ENCODE measurements at regions of chr7 and their contacts with region 1.

Region 1: GRCh38 chr7:123748734-123749536 is at the start of gene WASL:
- DNase-seq: peak; percentile 89
- H3K4me3 ChIP-seq: peak within 1 kb of the TSS; percentile 93 to 98 (median 98)
- H3K27ac ChIP-seq: peak within 1 kb of the TSS; percentile 71
- H3K4me1 ChIP-seq: peaks cover 46% of the 10 kb centered on the region
- H3K27me3 ChIP-seq: no peaks in the 10 kb centered on the region
- CTCF ChIP-seq: no peak
- POLR2A ChIP-seq: peak; percentile 87
- total RNA-seq, gene WASL: 22.1 and 24.0 TPM in 2 replicates

Region 2: DNA sequence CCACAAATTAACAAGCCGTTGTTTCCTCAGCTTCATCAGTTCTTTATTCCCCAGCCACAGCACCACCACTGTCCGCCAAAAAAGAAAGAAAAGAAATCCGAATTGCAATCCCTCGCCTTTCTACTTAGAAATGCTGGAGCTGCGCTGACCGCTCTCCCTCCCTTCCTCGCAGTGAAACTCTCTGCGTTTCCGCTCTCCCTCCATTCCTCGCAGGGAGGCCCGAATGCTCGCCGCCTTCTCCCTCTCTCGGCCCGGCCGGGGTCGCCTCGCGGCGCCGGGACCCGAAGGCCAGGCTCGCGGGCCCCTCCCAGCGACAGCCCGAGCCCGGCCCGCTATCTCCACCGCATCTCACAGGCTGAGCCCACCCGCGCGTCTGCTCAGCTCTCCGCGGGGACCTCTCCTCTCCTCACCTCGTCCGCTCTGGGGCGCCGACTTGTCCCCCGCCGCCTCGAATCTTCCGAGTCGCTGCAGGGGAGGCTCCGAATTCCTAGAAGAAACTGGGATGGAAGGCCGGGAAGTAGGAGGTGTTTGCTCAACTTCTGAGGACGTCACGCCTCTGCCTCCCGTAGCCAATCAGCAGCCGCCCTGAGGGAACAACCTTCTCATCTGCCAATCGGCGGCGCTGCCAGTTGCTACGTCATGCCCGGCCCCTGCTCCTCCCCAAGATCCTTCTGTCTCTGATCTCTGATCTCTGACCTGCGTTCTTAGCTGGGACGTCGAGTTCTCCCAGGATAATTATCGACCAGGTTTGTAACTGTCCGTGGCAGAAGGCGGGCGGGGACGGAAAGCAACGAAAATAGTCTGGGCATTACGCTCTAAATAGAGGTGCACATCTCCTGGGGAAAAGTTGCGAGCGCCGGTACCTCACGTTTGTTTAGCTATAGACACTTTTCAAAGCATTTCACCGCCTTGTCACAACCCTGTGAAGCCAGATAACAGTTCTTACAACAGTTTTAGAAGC is 1604.9 kb before region 1 on chr7 and contains the start of gene AASS:
- CTCF ChIA-PET with region 1: no interaction called
- POLR2A ChIA-PET with region 1: no interaction called
- dilution Hi-C with region 1: no loop called
- intact Hi-C with region 1: loop called (anchors 5 kb)
- DNase-seq: peak; percentile 96
- H3K4me3 ChIP-seq: peak within 1 kb of the TSS; percentile 68 to 92 (median 81)
- H3K27ac ChIP-seq: peak within 1 kb of the TSS; percentile 58
- H3K4me1 ChIP-seq: peaks cover 16% of the 10 kb centered on the region
- H3K27me3 ChIP-seq: no peaks in the 10 kb centered on the region
- CTCF ChIP-seq: no peak
- POLR2A ChIP-seq: peak; percentile 71
- total RNA-seq, gene AASS: 27.8 and 30.1 TPM in 2 replicates

Region 3: GRCh38 chr7:123534383-123535260 is 214.3 kb before region 1 on chr7 and contains the start of gene IQUB:
- CTCF ChIA-PET with region 1: interaction called, 6 read pairs
- POLR2A ChIA-PET with region 1: interaction called, 5 read pairs
- dilution Hi-C with region 1: no loop called
- intact Hi-C with region 1: loop called (anchors 2 kb)
- DNase-seq: peak; percentile 95
- H3K4me3 ChIP-seq: peak within 1 kb of the TSS; percentile 61 to 81 (median 80)
- H3K27ac ChIP-seq: peak within 1 kb of the TSS; percentile 74
- H3K4me1 ChIP-seq: peaks cover 27% of the 10 kb centered on the region
- H3K27me3 ChIP-seq: peaks cover 6 to 13% of the 10 kb centered on the region in 2 experiments
- CTCF ChIP-seq: no peak
- POLR2A ChIP-seq: no peak
- total RNA-seq, gene IQUB: not detected in 2 replicates

Region 4: DNA sequence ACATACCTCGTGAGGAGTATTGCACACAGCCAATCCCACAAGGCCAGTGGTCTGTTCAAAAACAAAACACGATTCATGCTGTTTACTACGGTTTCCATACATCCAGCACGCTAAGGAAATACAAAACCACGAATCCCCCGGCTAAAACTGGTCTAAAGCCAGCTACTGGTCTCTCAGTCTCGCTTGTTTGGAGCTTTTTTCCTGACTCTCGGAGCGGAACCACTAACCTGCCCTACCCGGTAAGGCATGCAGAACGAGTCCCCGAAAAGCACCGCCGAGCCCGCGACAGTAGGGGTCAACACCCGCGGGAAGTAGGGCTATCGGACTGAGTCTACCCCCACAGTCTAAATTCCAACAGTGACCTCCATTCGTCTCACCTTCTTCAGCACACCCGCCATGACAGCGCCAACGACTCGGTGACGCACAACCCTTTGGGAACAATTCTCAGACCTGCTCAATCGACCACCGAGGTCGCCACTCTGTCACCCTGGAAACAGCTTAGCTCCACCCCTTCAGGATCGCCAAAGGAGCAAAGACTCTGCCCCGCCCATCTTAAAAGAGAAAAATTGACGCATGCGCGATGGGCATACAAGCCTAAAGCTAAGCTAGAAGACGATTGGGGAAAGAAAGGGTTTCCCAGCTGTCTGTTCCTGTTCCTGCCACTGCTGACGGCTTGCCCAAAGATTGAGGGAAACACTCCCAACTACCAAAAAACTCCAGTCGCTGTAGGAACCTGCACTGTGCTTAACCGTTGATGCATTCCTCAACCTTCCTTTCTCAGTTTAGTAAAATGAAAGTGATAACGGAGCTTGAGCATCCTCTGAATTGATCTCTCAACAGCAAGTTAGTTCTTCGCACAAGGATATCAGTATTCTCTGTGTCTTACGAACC is 191.3 kb before region 1 on chr7 and contains the start of gene NDUFA5:
- CTCF ChIA-PET with region 1: interaction called, 3 read pairs
- POLR2A ChIA-PET with region 1: interaction called, 3 read pairs
- dilution Hi-C with region 1: no loop called
- intact Hi-C with region 1: loop called (anchors 5 kb)
- DNase-seq: peak; percentile 99
- H3K4me3 ChIP-seq: peak within 1 kb of the TSS; percentile 66 to 98 (median 88)
- H3K27ac ChIP-seq: peak within 1 kb of the TSS; percentile 75
- H3K4me1 ChIP-seq: peaks cover 6% of the 10 kb centered on the region
- H3K27me3 ChIP-seq: no peaks in the 10 kb centered on the region
- CTCF ChIP-seq: no peak
- POLR2A ChIP-seq: peak; percentile 76
- total RNA-seq, gene NDUFA5: 57.6 and 62.3 TPM in 2 replicates

Region 5: GRCh38 chr7:123655614-123656013 is 93.3 kb before region 1 on chr7 and contains the start of gene LMOD2:
- CTCF ChIA-PET with region 1: no interaction called
- POLR2A ChIA-PET with region 1: no interaction called
- dilution Hi-C with region 1: no loop called
- intact Hi-C with region 1: no loop called
- DNase-seq: no peak
- H3K4me3 ChIP-seq: no peak within 1 kb of the TSS
- H3K27ac ChIP-seq: no peak within 1 kb of the TSS
- H3K4me1 ChIP-seq: peaks cover 4% of the 10 kb centered on the region
- H3K27me3 ChIP-seq: peaks cover 0 to 2% of the 10 kb centered on the region in 2 experiments
- CTCF ChIP-seq: no peak
- POLR2A ChIP-seq: no peak
- total RNA-seq, gene LMOD2: not detected in 2 replicates

Region 6: GRCh38 chr7:123705211-123705901 is 43.6 kb before region 1 on chr7:
- CTCF ChIA-PET with region 1: interaction called, 20 read pairs
- POLR2A ChIA-PET with region 1: no interaction called
- dilution Hi-C with region 1: no loop called
- intact Hi-C with region 1: loop called (anchors 2 kb)
- DNase-seq: no peak
- H3K4me3 ChIP-seq: no peak overlapping the region
- H3K27ac ChIP-seq: no peak overlapping the region
- H3K4me1 ChIP-seq: no peaks in the 10 kb centered on the region
- H3K27me3 ChIP-seq: no peaks in the 10 kb centered on the region
- CTCF ChIP-seq: no peak
- POLR2A ChIP-seq: no peak

Region 7: DNA sequence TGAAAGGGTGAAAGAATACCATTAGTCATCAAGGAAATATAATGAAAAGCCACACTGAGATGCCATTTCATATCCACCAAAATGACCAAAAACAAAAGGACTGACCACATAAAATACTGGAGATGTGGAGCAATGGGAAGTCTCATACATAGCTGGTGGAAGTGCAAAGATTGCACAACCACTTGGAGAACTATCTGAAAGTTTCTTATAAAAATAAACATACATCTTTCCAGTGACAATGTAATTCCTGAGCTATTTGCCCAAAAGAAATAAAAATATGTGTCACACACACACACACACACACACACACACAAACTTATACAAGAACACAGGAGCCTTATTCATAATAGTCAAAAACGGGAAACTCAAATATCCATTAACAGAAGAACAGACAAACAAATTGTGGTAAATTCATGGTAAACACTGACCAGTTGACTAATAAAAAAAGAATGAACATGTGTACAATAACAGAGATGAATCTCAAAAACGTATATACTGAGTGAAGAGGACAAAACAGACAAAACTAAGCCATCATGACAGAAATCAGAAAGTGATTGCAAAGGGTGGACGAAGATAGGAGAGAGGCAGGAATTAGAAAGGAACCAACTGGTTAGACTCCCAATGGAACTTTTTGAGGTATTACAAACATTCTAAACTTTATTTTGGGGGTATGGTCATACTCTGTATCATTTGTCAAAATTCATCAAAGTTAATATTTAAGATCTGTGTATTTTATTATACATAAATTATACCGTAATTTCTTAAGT is 21.7 kb before region 1 on chr7:
- CTCF ChIA-PET with region 1: interaction called, 7 read pairs
- POLR2A ChIA-PET with region 1: interaction called, 4 read pairs
- dilution Hi-C with region 1: no loop called
- intact Hi-C with region 1: loop called (anchors 2 kb)
- DNase-seq: peak; percentile 79
- H3K4me3 ChIP-seq: no peak overlapping the region
- H3K27ac ChIP-seq: peak overlapping the region; percentile 3
- H3K4me1 ChIP-seq: peaks cover 15% of the 10 kb centered on the region
- H3K27me3 ChIP-seq: no peaks in the 10 kb centered on the region
- CTCF ChIP-seq: no peak
- POLR2A ChIP-seq: no peak

Region 8: GRCh38 chr7:123865517-123866117 is 116.7 kb after region 1 on chr7:
- CTCF ChIA-PET with region 1: interaction called, 8 read pairs
- POLR2A ChIA-PET with region 1: no interaction called
- dilution Hi-C with region 1: no loop called
- intact Hi-C with region 1: loop called (anchors 5 kb)
- DNase-seq: peak; percentile 84
- H3K4me3 ChIP-seq: no peak overlapping the region
- H3K27ac ChIP-seq: peak overlapping the region; percentile 34
- H3K4me1 ChIP-seq: peaks cover 9% of the 10 kb centered on the region
- H3K27me3 ChIP-seq: no peaks in the 10 kb centered on the region
- CTCF ChIP-seq: peak; percentile 41 to 56
- POLR2A ChIP-seq: no peak

Region 9: DNA sequence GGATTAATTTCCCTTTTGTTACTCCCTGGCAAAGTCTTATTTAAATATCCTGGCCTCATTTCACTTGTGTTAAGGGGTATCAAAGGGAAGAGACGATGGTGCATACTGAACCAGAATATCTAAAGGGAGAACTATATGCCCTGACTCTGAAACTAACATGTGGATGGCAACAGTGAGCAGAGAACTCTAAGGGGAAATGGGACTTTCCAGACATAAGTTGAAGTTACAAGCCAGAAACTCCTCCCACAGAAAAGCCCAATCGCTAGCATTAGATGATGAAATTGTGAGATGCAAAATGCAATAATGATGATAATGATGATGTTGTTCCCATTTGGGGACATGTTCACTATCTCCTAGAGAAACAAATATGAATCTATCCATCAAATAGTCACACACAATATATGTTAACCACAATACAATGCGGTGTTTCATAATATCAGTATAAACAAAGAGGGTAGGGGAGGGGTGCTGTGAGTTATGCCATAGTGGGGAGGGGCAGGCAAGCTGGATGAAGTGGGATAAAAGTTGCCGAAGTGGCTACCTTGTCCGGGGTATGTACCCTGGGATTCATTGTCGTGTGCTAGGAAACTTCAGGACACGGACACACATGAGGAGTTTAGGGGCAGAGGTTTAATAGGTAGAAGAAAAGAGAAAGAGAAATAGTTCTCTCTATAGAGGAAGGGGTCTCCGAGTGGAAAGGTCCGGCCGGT is 246.8 kb after region 1 on chr7:
- CTCF ChIA-PET with region 1: no interaction called
- POLR2A ChIA-PET with region 1: no interaction called
- dilution Hi-C with region 1: no loop called
- intact Hi-C with region 1: no loop called
- DNase-seq: no peak
- H3K4me3 ChIP-seq: no peak overlapping the region
- H3K27ac ChIP-seq: no peak overlapping the region
- H3K4me1 ChIP-seq: no peaks in the 10 kb centered on the region
- H3K27me3 ChIP-seq: no peaks in the 10 kb centered on the region
- CTCF ChIP-seq: no peak
- POLR2A ChIP-seq: no peak